ENCODE measurements at regions of chr2 and their contacts with region 1.

Region 1: DNA sequence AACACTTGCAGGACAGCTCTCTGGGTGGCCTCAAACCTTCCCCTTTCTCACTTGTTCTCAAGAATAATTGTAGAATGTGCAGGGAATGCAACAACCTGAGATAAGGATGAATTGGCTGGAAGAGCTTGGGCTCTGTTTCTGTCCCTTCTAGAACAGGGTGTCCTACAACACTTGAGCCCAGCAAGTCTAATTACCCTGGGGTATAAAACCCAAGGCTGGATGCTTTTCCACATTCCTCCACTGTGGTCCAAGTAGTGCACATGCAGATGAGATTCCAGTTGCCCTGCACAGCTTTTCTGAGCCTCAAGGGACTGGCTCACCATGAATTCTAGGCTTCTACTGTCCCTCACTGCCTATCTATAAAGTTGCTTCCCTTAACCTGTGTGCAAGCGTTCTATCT is 140.8 kb upstream of the SPATS2L start:
- DNase-seq: no peak
- H3K4me3 ChIP-seq: no peak overlapping the region
- H3K27ac ChIP-seq: no peak overlapping the region
- H3K4me1 ChIP-seq: no peaks in the 10 kb centered on the region
- H3K27me3 ChIP-seq: no peaks in the 10 kb centered on the region
- CTCF ChIP-seq: no peak

Region 2: GRCh38 chr2:200225951-200226350 is 60.3 kb after region 1 on chr2:
- CTCF ChIA-PET with region 1: no interaction called
- POLR2A ChIA-PET with region 1: no interaction called
- intact Hi-C with region 1: no loop called
- DNase-seq: no peak
- H3K4me3 ChIP-seq: no peak overlapping the region
- H3K27ac ChIP-seq: no peak overlapping the region
- H3K4me1 ChIP-seq: no peaks in the 10 kb centered on the region
- H3K27me3 ChIP-seq: no peaks in the 10 kb centered on the region
- CTCF ChIP-seq: no peak

Region 3: GRCh38 chr2:200422532-200423261 is 257.0 kb after region 1 on chr2:
- CTCF ChIA-PET with region 1: no interaction called
- POLR2A ChIA-PET with region 1: interaction called, 13 read pairs
- intact Hi-C with region 1: no loop called
- DNase-seq: no peak
- H3K4me3 ChIP-seq: no peak overlapping the region
- H3K27ac ChIP-seq: no peak overlapping the region
- H3K4me1 ChIP-seq: no peaks in the 10 kb centered on the region
- H3K27me3 ChIP-seq: no peaks in the 10 kb centered on the region
- CTCF ChIP-seq: peak; percentile 23; the same call in 1 of the 2 replicates